K562 (cell line): ENCODE measurements at regions of chr19 and their contacts with region 1.

Region 1: DNA sequence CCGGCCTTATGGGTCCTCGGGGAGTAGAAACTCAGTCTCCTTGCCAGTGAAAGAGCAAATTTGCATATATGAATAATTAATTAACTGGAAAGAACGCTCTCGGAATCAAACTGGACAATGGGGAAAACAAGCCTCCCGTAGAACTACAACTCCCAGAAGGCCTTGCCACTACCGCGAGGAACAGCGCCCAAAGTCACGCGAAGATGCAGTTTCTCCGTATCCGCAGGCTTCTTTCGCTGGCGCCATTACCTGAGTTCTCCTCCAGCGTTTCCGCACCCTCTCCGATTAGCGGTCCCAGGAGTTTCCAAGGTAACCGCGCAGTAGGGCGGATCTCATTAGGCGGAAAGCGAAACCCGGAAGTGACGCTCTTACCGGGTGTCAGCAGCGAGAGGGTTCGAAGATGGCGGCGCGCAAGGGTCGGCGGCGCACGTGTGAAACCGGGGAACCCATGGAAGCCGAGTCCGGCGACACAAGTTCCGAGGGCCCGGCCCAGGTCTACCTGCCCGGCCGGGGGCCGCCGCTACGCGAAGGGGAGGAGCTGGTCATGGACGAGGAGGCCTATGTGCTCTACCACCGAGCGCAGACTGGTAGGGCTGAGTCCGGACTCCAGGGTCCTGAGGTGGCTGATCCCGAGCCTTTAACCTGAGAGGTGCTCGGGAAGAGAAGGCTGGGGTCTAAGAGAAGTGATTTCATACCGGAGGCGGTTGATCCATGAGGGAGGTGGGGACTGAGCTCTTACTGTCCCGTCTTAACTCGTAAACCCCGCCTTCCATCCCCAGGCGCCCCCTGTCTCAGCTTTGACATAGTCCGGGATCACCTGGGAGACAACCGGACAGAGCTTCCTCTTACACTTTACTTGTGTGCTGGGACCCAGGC is at the start of gene GRWD1:
- DNase-seq: peak; percentile 85 to 98 (median 90)
- ATAC-seq: peak; percentile 95
- H3K4me3 ChIP-seq: peak within 1 kb of the TSS; percentile 97
- H3K27ac ChIP-seq: peak within 1 kb of the TSS; percentile 84
- H3K4me1 ChIP-seq: peaks cover 12 to 22% of the 10 kb centered on the region in 2 experiments
- H3K27me3 ChIP-seq: no peaks in the 10 kb centered on the region
- CTCF ChIP-seq: 0 out of 6 replicates have a peak, but pooled peaks of 1 of the 3 experiments have one; percentile 22
- EP300 ChIP-seq: 0 out of 2 replicates have a peak, but pooled peaks have one; percentile 2
- POLR2A ChIP-seq: peak; percentile 89
- RAD21 ChIP-seq: no peak
- polyA plus RNA-seq, gene GRWD1: 1.5 to 2.6 TPM

Region 2: DNA sequence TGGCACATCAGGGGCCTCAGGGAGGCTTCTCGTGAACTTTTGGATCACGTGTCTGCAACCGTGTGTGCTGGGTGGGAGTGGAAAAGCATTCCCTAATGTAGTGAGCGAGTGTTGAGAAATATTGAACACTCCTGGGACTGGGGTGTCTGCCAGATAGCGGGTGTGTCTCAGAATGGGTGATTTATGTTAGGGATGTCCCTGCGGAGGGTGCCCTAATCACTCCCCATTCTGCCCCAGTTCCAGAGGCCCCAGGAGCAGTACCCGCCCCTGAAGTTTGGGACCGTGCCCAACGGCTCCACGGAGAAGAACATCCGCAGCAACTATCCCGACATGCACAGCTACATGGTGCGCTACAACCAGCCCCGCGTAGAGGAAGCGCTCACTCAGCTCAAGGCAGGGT is 24.3 kb before region 1 on chr19:
- CTCF ChIA-PET with region 1: no interaction called
- POLR2A ChIA-PET with region 1: no interaction called
- in situ Hi-C with region 1: no loop called
- intact Hi-C with region 1: no loop called
- DNase-seq: no peak
- ATAC-seq: no peak
- H3K4me3 ChIP-seq: no peak overlapping the region
- H3K27ac ChIP-seq: no peak overlapping the region
- H3K4me1 ChIP-seq: peaks cover 25 to 38% of the 10 kb centered on the region in 2 experiments
- H3K27me3 ChIP-seq: no peaks in the 10 kb centered on the region
- CTCF ChIP-seq: no peak
- EP300 ChIP-seq: no peak
- POLR2A ChIP-seq: no peak
- RAD21 ChIP-seq: no peak

Region 3: DNA sequence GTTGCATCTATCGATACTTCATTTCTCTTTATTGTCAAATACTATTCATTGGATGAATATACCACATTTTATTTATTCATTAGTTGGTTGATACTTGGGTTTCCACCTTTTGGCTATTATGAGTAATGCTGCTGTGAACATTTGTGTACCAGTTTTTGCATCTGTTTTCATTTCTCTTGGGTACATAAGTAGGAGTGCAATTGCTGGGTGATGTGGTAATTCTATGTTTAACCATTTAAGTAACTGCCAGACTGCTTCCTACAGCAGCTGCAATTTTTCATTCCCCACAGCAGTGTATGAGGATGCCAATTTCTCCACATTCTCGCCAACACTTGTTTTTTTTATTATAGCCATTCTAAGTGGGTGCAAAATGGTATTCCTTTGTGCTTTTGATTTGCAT is 12.2 kb after region 1 on chr19:
- CTCF ChIA-PET with region 1: no interaction called
- POLR2A ChIA-PET with region 1: interaction called, 25 read pairs
- in situ Hi-C with region 1: no loop called
- intact Hi-C with region 1: no loop called
- DNase-seq: no peak
- ATAC-seq: no peak
- H3K4me3 ChIP-seq: no peak overlapping the region
- H3K27ac ChIP-seq: no peak overlapping the region
- H3K4me1 ChIP-seq: peaks cover 0 to 40% of the 10 kb centered on the region in 2 experiments; a peak in 2 of 5 replicates
- H3K27me3 ChIP-seq: no peaks in the 10 kb centered on the region
- CTCF ChIP-seq: no peak
- EP300 ChIP-seq: no peak
- POLR2A ChIP-seq: no peak
- RAD21 ChIP-seq: no peak